Mammary epithelial cell (primary cell): ENCODE measurements at regions of chr7 and their contacts with region 1.

Region 1: GRCh38 chr7:43439631-43440401 is 143.1 kb upstream of the STK17A start:
- DNase-seq: peak; percentile 26
- H3K4me3 ChIP-seq: no peak overlapping the region
- H3K27ac ChIP-seq: no peak overlapping the region
- H3K4me1 ChIP-seq: no peaks in the 10 kb centered on the region
- H3K27me3 ChIP-seq: no peaks in the 10 kb centered on the region
- CTCF ChIP-seq: peak; percentile 82

Region 2: GRCh38 chr7:43175570-43176200 is 264.1 kb before region 1 on chr7:
- CTCF ChIA-PET with region 1: no interaction called
- dilution Hi-C with region 1: no loop called
- in situ Hi-C with region 1: no loop called
- intact Hi-C with region 1: loop called (anchors 1 kb)
- DNase-seq: no peak
- H3K4me3 ChIP-seq: no peak overlapping the region
- H3K27ac ChIP-seq: no peak overlapping the region
- H3K4me1 ChIP-seq: no peaks in the 10 kb centered on the region
- H3K27me3 ChIP-seq: no peaks in the 10 kb centered on the region
- CTCF ChIP-seq: no peak

Region 3: GRCh38 chr7:43242628-43243255 is 197.1 kb before region 1 on chr7:
- CTCF ChIA-PET with region 1: no interaction called
- dilution Hi-C with region 1: no loop called
- in situ Hi-C with region 1: no loop called
- intact Hi-C with region 1: no loop called
- DNase-seq: no peak
- H3K4me3 ChIP-seq: no peak overlapping the region
- H3K27ac ChIP-seq: no peak overlapping the region
- H3K4me1 ChIP-seq: no peaks in the 10 kb centered on the region
- H3K27me3 ChIP-seq: no peaks in the 10 kb centered on the region
- CTCF ChIP-seq: no peak

Region 4: GRCh38 chr7:43260980-43261878 is 178.6 kb before region 1 on chr7:
- CTCF ChIA-PET with region 1: no interaction called
- dilution Hi-C with region 1: no loop called
- in situ Hi-C with region 1: no loop called
- intact Hi-C with region 1: loop called (anchors 1 kb)
- DNase-seq: peak; percentile 65
- H3K4me3 ChIP-seq: no peak overlapping the region
- H3K27ac ChIP-seq: no peak overlapping the region
- H3K4me1 ChIP-seq: peaks cover 3% of the 10 kb centered on the region
- H3K27me3 ChIP-seq: no peaks in the 10 kb centered on the region
- CTCF ChIP-seq: peak; percentile 94 to 95

Region 5: DNA sequence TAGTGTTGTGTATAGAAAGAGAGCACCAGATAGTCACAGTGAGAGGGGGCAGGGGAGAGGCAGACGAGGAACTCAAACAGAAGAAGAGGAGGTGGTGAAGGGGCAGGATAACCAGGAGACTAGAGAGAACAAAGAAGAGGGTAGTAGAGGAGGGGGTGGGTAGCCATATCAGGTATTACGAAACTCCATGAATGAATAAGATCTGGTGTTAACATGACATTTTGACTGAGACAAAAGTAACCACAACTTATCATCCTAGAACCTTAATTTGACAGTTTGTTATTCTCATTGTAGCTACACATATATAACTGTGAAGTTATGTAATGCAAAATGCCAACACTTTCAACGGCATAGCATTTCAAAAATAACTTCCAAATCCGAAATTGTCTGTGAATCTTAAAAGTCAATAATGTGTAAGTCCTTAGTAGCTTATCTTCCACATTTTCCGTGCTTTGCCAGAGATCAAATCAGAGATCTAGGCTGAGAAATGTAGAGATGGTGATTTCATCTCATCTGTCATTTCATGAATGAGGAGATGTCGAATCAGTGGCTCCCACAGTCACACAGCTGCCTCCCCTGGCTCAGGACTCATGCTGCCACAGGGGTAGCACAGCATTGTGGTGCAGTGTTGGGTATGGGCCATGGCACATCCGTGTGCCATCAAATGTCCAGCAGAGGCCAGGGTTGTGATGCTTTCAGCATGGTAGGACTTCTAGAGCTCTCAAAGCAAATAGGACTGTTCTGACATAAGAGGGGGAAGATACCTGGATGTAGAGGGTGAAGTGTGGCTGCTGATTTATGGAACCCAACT is 125.2 kb before region 1 on chr7:
- CTCF ChIA-PET with region 1: no interaction called
- dilution Hi-C with region 1: no loop called
- in situ Hi-C with region 1: no loop called
- intact Hi-C with region 1: loop called (anchors 1 kb)
- DNase-seq: no peak
- H3K4me3 ChIP-seq: no peak overlapping the region
- H3K27ac ChIP-seq: no peak overlapping the region
- H3K4me1 ChIP-seq: no peaks in the 10 kb centered on the region
- H3K27me3 ChIP-seq: no peaks in the 10 kb centered on the region
- CTCF ChIP-seq: peak; percentile 2 to 40

Region 6: GRCh38 chr7:43394441-43395130 is 45.2 kb before region 1 on chr7:
- CTCF ChIA-PET with region 1: no interaction called
- dilution Hi-C with region 1: no loop called
- in situ Hi-C with region 1: no loop called
- intact Hi-C with region 1: loop called (anchors 5 kb)
- DNase-seq: peak; percentile 93
- H3K4me3 ChIP-seq: no peak overlapping the region
- H3K27ac ChIP-seq: peak overlapping the region; percentile 84
- H3K4me1 ChIP-seq: peaks cover 36% of the 10 kb centered on the region
- H3K27me3 ChIP-seq: no peaks in the 10 kb centered on the region
- CTCF ChIP-seq: no peak